CD8-positive, alpha-beta T cell (primary cell): ENCODE measurements at regions of chr11 and their contacts with region 1.

Region 1: GRCh38 chr11:25094085-25094802 is 597.4 kb downstream of the LUZP2 start:
- DNase-seq: peak in 1 of 9 experiments; percentile 1
- ATAC-seq: no peak
- H3K4me3 ChIP-seq: no peak overlapping the region
- H3K4me3 Mint-ChIP-seq: no peak overlapping the region
- H3K27ac ChIP-seq: no peak overlapping the region
- H3K27ac Mint-ChIP-seq: no peak overlapping the region
- H3K4me1 ChIP-seq: no peaks in the 10 kb centered on the region
- H3K4me1 Mint-ChIP-seq: no peaks in the 10 kb centered on the region
- H3K27me3 ChIP-seq: no peaks in the 10 kb centered on the region
- H3K27me3 Mint-ChIP-seq: no peaks in the 10 kb centered on the region
- CTCF ChIP-seq: no peak

Region 2: GRCh38 chr11:26478710-26479109 is 1384.5 kb after region 1 on chr11:
- CTCF ChIA-PET with region 1: no interaction called
- POLR2A ChIA-PET with region 1: no interaction called
- intact Hi-C with region 1: loop called in 1 of 2 experiments (anchors 5 kb)
- DNase-seq: no peak
- ATAC-seq: no peak
- H3K4me3 ChIP-seq: no peak overlapping the region
- H3K4me3 Mint-ChIP-seq: no peak overlapping the region
- H3K27ac ChIP-seq: no peak overlapping the region
- H3K27ac Mint-ChIP-seq: no peak overlapping the region
- H3K4me1 ChIP-seq: no peaks in the 10 kb centered on the region
- H3K4me1 Mint-ChIP-seq: no peaks in the 10 kb centered on the region
- H3K27me3 ChIP-seq: no peaks in the 10 kb centered on the region
- H3K27me3 Mint-ChIP-seq: no peaks in the 10 kb centered on the region
- CTCF ChIP-seq: no peak